Activated CD4-positive, alpha-beta T cell treated with anti-CD3 and anti-CD28 coated beads for 36 hours (primary cell): ENCODE measurements at regions of chr17 and their contacts with region 1.

Region 1: DNA sequence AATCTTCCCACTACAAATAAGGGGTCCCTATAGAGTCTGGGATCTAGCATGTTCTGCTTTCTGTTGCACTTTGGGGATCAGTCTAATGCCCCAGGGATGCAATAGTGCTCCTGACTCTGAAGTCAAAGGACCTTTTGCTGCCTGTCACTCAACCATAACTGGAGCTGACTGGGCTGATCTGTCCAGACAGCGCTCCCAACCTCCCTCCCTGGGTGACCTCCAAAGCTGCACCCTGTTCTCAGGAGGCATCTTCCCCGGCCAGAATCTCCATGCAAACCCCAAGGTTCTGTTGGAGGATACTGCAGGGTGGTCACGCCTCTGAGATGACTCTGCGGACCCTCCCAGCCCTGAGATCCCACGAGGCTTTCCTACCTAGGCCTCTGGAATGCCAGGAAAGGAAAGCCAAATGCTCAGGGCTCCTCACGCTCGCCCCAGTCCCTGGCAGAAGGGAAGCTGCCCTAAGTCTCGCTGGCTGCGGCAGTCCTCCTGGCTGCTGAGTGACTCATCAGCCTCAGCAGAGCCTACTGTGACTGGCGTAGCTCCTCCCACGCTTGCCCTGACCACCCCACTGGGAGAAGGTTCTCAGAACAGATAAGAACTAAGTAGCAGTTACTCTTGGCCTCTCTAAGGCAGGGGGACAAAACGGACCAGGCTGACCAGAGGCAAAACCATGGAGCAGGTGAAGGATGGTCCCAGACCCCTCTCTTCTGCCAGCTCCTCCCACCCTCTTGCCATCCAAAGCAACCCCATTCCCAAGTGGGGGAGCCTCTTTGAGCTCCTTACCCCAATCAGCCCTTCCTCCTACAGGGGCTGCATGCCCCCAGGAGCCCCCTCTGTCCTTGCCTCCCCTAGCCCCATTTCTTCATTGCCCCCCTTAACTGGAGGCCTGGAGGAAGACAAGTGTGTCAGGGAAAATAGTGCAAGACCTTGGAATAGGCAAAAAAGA is 124.1 kb upstream of the TNRC6C start:
- DNase-seq: peak; percentile 88
- ATAC-seq: peak; percentile 79
- H3K4me3 Mint-ChIP-seq: no peak overlapping the region
- H3K27ac Mint-ChIP-seq: peak overlapping the region; percentile 3
- H3K4me1 Mint-ChIP-seq: peaks cover 51% of the 10 kb centered on the region
- H3K27me3 Mint-ChIP-seq: peaks cover 3% of the 10 kb centered on the region

Region 2: GRCh38 chr17:77501101-77501566 is 333.3 kb before region 1 on chr17:
- CTCF ChIA-PET with region 1: no interaction called
- POLR2A ChIA-PET with region 1: no interaction called
- intact Hi-C with region 1: no loop called
- DNase-seq: peak; percentile 72
- ATAC-seq: peak; percentile 34
- H3K4me3 Mint-ChIP-seq: no peak overlapping the region
- H3K27ac Mint-ChIP-seq: no peak overlapping the region
- H3K4me1 Mint-ChIP-seq: no peaks in the 10 kb centered on the region
- H3K27me3 Mint-ChIP-seq: no peaks in the 10 kb centered on the region

Region 3: GRCh38 chr17:77796176-77796860 is 38.1 kb before region 1 on chr17:
- CTCF ChIA-PET with region 1: no interaction called
- POLR2A ChIA-PET with region 1: no interaction called
- intact Hi-C with region 1: no loop called
- DNase-seq: no peak
- ATAC-seq: no peak
- H3K4me3 Mint-ChIP-seq: no peak overlapping the region
- H3K27ac Mint-ChIP-seq: no peak overlapping the region
- H3K4me1 Mint-ChIP-seq: no peaks in the 10 kb centered on the region
- H3K27me3 Mint-ChIP-seq: peaks cover 4% of the 10 kb centered on the region

Region 4: GRCh38 chr17:77807051-77807745 is 27.2 kb before region 1 on chr17:
- CTCF ChIA-PET with region 1: no interaction called
- POLR2A ChIA-PET with region 1: no interaction called
- intact Hi-C with region 1: loop called in 1 of 2 experiments (anchors 2 kb)
- DNase-seq: no peak
- ATAC-seq: no peak
- H3K4me3 Mint-ChIP-seq: no peak overlapping the region
- H3K27ac Mint-ChIP-seq: no peak overlapping the region
- H3K4me1 Mint-ChIP-seq: peaks cover 2% of the 10 kb centered on the region
- H3K27me3 Mint-ChIP-seq: peaks cover 3% of the 10 kb centered on the region